Activated B cell treated with CpG ODN at 0.5 μM for 24 hours (primary cell): ENCODE measurements at regions of chr1 and their contacts with region 1.

Region 1: GRCh38 chr1:178542560-178543356 is 29.8 kb downstream of the TEX35 start:
- DNase-seq: peak; percentile 100
- ATAC-seq: peak; percentile 82
- H3K4me3 Mint-ChIP-seq: peak overlapping the region; percentile 97
- H3K27ac Mint-ChIP-seq: peak overlapping the region; percentile 96
- H3K4me1 Mint-ChIP-seq: peaks cover 47% of the 10 kb centered on the region
- H3K27me3 Mint-ChIP-seq: no peaks in the 10 kb centered on the region
- CTCF ChIP-seq: peak; percentile 85

Region 2: DNA sequence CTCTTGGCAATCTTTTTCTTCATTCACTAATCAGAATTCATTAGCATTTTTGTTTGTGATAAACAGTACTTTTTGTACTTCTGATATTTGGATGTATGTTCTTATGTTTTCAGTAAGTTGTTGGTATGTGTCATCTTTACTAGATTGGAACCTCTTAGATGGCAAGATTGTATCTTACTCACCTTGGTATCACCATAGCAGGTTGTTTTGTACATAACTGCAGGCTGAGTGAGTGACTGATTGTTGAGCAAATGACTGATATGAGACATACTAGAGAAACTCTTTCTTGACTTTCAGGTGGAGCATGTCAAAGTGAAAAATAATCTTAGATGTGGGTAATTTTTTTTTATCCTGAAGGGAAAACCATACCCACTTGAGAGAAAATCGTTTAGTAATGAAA is 219.7 kb before region 1 on chr1:
- CTCF ChIA-PET with region 1: no interaction called
- POLR2A ChIA-PET with region 1: no interaction called
- intact Hi-C with region 1: no loop called
- DNase-seq: no peak
- ATAC-seq: no peak
- H3K4me3 Mint-ChIP-seq: no peak overlapping the region
- H3K27ac Mint-ChIP-seq: no peak overlapping the region
- H3K4me1 Mint-ChIP-seq: peaks cover 10% of the 10 kb centered on the region
- H3K27me3 Mint-ChIP-seq: peaks cover 10% of the 10 kb centered on the region
- CTCF ChIP-seq: no peak

Region 3: DNA sequence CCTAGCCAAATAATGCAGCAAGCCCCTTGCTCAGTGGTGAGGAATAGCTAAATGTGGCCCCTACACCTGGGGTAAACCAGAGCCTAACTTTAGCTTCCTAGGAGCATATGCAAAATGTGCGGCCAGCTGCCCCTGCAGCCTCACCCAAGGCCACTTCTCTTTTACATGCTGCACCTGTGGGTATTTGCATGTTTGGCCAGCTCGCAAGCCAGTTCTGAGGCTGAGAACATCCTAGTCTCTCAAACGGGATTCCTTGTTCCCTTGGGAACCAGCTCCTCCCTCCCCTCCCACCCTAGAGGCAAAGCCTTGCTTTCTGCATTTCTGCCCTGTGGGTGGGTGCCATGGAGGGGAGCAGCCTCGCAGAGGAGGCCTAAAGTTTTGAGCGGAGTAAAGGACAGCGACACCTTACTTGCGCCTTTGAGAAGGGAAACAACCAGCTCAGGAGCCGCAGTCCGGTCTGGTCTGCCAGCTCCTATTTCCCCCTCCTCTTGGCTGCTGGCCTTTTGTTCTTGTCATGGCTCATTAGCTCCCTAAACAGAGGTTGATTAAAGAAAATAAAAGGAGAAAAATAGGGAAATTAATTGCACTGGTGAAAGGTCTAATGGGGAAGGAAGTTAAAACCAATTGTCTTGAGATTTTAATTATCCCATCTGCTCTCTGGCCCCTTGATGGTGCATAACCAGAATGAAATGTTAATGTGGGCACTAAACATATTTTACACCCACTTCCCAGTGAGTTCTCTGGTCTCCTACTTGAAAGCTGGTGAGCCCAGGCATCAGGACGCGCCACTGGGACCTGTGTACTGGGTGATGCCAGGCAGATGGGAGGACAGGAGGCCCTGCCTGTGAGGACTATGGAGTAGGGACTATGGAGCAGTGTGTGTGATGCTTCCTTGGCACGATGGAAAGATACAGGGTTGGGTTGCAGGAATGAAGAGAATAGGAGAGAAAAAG is 38.9 kb after region 1 on chr1:
- CTCF ChIA-PET with region 1: interaction called, 24 read pairs
- POLR2A ChIA-PET with region 1: interaction called, 74 read pairs
- intact Hi-C with region 1: loop called (anchors 1 kb)
- DNase-seq: peak; percentile 57
- ATAC-seq: peak; percentile 56
- H3K4me3 Mint-ChIP-seq: peak overlapping the region; percentile 66
- H3K27ac Mint-ChIP-seq: peak overlapping the region; percentile 98
- H3K4me1 Mint-ChIP-seq: peaks cover 93% of the 10 kb centered on the region
- H3K27me3 Mint-ChIP-seq: no peaks in the 10 kb centered on the region
- CTCF ChIP-seq: no peak

Region 4: DNA sequence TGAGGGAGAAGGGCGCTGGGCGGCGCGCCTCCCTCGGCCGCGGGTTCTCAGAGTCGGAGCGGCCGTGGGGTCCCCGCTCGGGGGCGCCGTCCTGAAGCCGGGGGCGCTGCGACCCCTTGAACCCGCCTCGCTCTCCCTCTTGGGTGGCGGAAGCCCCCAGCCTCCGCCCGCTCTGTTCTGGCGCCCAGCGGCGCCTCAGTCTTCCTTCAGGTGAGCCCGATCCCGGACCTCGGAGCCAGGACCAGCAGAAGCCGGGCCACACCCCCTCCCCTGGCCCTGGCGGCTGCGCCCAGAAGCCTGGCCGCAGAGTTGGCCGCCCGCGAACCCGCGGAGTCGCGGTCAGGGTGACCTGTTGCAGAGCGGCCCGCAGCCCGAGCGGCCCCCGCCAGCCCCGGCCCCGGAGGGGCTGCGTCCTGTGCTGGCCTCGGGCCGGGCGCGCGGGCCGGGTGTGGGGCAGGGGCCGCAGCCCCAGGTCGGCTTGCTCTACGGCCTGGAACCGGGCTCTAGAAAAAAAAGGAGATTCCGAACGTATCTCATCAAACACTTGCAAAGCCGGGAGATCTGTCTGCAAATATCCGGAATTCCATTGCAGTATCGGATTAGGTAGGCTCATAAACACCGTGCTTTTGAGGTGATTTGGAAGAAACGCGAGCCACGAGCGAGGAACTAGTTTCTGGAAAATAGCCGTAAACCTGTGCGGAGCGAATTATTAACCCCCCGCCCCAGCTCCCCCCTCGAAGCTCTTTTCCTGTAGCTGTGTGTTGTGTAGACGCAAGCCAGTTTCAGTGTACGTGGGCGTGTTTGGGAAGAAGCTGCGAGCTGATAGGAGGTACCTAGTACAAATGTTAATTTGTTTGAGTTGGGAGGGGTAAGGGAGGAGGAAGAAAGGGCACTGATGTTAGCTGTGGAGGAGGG is 183.1 kb after region 1 on chr1:
- CTCF ChIA-PET with region 1: interaction called, 41 read pairs
- POLR2A ChIA-PET with region 1: interaction called, 102 read pairs
- intact Hi-C with region 1: loop called (anchors 1 kb)
- DNase-seq: peak; percentile 53
- ATAC-seq: peak; percentile 74
- H3K4me3 Mint-ChIP-seq: peak overlapping the region; percentile 92
- H3K27ac Mint-ChIP-seq: peak overlapping the region; percentile 96
- H3K4me1 Mint-ChIP-seq: peaks cover 55% of the 10 kb centered on the region
- H3K27me3 Mint-ChIP-seq: no peaks in the 10 kb centered on the region
- CTCF ChIP-seq: no peak

Region 5: GRCh38 chr1:178774263-178774662 is 231.5 kb after region 1 on chr1:
- CTCF ChIA-PET with region 1: interaction called, 19 read pairs
- POLR2A ChIA-PET with region 1: interaction called, 3 read pairs
- intact Hi-C with region 1: loop called (anchors 1 kb)
- DNase-seq: no peak
- ATAC-seq: peak; percentile 54
- H3K4me3 Mint-ChIP-seq: no peak overlapping the region
- H3K27ac Mint-ChIP-seq: peak overlapping the region; percentile 61
- H3K4me1 Mint-ChIP-seq: peaks cover 59% of the 10 kb centered on the region
- H3K27me3 Mint-ChIP-seq: no peaks in the 10 kb centered on the region
- CTCF ChIP-seq: no peak

Region 6: GRCh38 chr1:178885869-178886268 is 343.1 kb after region 1 on chr1:
- CTCF ChIA-PET with region 1: interaction called, 8 read pairs
- POLR2A ChIA-PET with region 1: no interaction called
- intact Hi-C with region 1: loop called (anchors 2 kb)
- DNase-seq: no peak
- ATAC-seq: no peak
- H3K4me3 Mint-ChIP-seq: no peak overlapping the region
- H3K27ac Mint-ChIP-seq: peak overlapping the region; percentile 80
- H3K4me1 Mint-ChIP-seq: peaks cover 11% of the 10 kb centered on the region
- H3K27me3 Mint-ChIP-seq: no peaks in the 10 kb centered on the region
- CTCF ChIP-seq: no peak

Region 7: GRCh38 chr1:178916448-178917174 is 373.9 kb after region 1 on chr1:
- CTCF ChIA-PET with region 1: no interaction called
- POLR2A ChIA-PET with region 1: no interaction called
- intact Hi-C with region 1: no loop called
- DNase-seq: no peak
- ATAC-seq: no peak
- H3K4me3 Mint-ChIP-seq: no peak overlapping the region
- H3K27ac Mint-ChIP-seq: peak overlapping the region; percentile 54
- H3K4me1 Mint-ChIP-seq: peaks cover 74% of the 10 kb centered on the region
- H3K27me3 Mint-ChIP-seq: no peaks in the 10 kb centered on the region
- CTCF ChIP-seq: no peak

Region 8: DNA sequence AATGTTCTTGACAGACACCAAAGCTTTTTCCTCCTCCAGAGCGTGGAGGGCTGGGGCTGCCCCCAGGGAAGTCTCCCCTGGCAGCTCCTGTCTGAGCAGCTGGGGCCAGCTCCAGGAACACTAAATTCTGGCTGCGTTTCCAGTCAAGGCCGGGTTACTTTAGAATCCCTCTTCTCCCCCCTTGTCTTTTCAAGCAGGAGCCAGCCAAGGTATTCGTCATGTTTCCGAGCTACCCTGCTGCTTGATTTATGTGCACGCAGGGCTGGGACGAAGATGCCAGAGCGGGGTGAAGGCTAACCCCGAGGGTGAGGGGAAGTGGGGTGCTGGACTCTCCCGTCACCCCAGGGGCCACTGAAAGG is 396.2 kb after region 1 on chr1:
- CTCF ChIA-PET with region 1: no interaction called
- POLR2A ChIA-PET with region 1: no interaction called
- intact Hi-C with region 1: no loop called
- DNase-seq: no peak
- ATAC-seq: no peak
- H3K4me3 Mint-ChIP-seq: no peak overlapping the region
- H3K27ac Mint-ChIP-seq: no peak overlapping the region
- H3K4me1 Mint-ChIP-seq: peaks cover 10% of the 10 kb centered on the region
- H3K27me3 Mint-ChIP-seq: peaks cover 5% of the 10 kb centered on the region
- CTCF ChIP-seq: no peak

Region 9: DNA sequence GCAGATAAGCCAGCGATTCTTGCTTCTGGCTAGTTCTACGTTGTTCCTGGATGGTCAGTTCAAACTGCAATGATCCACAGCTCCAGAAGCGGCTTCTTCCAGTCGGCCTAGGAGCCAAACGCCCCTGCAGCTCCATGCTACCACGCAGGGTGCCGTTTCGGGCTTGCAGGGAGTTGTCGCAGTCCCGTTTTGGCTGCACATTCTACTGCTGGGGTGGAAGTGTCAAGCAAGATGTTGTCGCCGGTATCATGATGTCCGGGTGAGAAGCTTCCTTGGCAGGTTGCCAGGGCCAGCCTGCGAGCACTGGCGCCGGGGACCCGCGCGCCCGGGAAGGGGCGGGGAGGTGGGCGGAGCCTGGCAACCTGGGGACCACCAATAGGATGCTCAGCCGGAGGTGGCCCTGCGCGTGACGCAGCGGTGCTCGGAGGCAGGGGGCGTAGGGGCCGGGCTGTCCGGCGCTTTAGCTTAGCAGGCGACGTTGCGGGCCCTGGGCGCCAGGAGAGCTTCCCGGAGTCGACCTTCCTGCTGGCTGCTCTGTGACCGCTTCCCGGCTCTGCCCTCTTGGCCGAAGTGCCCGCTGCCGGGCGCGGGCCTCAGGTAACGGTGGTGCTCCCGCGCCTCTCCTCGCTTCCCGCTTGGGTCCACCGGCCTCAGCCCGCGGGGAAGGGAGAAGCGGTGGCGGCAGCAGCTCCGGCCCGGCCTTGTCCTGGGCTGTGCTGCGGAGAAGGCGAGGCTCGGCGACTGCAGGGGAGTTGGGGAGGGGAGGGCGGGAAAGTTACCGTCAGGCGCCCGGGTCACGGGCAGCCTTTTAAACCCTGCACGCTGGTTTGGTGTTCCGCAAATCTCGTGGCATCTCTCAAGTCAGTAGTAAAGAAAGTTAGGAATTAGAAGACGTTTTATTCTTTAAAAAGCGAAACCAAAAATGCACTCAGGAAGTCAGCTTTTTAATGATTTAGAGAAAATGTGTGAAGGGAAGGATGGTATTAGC is 750.9 kb after region 1 on chr1 and contains the start of gene SOAT1:
- CTCF ChIA-PET with region 1: no interaction called
- POLR2A ChIA-PET with region 1: no interaction called
- intact Hi-C with region 1: loop called (anchors 2 kb)
- DNase-seq: peak; percentile 92
- ATAC-seq: peak; percentile 99
- H3K4me3 Mint-ChIP-seq: peak within 1 kb of the TSS; percentile 97
- H3K27ac Mint-ChIP-seq: peak within 1 kb of the TSS; percentile 93
- H3K4me1 Mint-ChIP-seq: peaks cover 44% of the 10 kb centered on the region
- H3K27me3 Mint-ChIP-seq: no peaks in the 10 kb centered on the region
- CTCF ChIP-seq: no peak
- total RNA-seq, gene SOAT1: 17.3 and 20.0 TPM in 2 replicates